ENCODE measurements at regions of chr12 and their contacts with region 1.

Region 1: GRCh38 chr12:89225808-89226411 is 126.4 kb downstream of the DUSP6 start:
- DNase-seq: peak; percentile 86
- H3K4me3 Mint-ChIP-seq: peak overlapping the region; percentile 70
- H3K27ac Mint-ChIP-seq: peak overlapping the region; percentile 99
- H3K4me1 Mint-ChIP-seq: peaks cover 70% of the 10 kb centered on the region
- H3K27me3 Mint-ChIP-seq: no peaks in the 10 kb centered on the region

Region 2: GRCh38 chr12:89019408-89020120 is 206.3 kb before region 1 on chr12:
- CTCF ChIA-PET with region 1: interaction called, 3 read pairs
- intact Hi-C with region 1: loop called (anchors 1 kb)
- DNase-seq: peak; percentile 86
- H3K4me3 Mint-ChIP-seq: no peak overlapping the region
- H3K27ac Mint-ChIP-seq: no peak overlapping the region
- H3K4me1 Mint-ChIP-seq: peaks cover 6% of the 10 kb centered on the region
- H3K27me3 Mint-ChIP-seq: peaks cover 3% of the 10 kb centered on the region

Region 3: GRCh38 chr12:89135976-89136634 is 89.8 kb before region 1 on chr12:
- CTCF ChIA-PET with region 1: no interaction called
- intact Hi-C with region 1: loop called (anchors 1 kb)
- DNase-seq: peak; percentile 9
- H3K4me3 Mint-ChIP-seq: no peak overlapping the region
- H3K27ac Mint-ChIP-seq: no peak overlapping the region
- H3K4me1 Mint-ChIP-seq: peaks cover 22% of the 10 kb centered on the region
- H3K27me3 Mint-ChIP-seq: no peaks in the 10 kb centered on the region

Region 4: DNA sequence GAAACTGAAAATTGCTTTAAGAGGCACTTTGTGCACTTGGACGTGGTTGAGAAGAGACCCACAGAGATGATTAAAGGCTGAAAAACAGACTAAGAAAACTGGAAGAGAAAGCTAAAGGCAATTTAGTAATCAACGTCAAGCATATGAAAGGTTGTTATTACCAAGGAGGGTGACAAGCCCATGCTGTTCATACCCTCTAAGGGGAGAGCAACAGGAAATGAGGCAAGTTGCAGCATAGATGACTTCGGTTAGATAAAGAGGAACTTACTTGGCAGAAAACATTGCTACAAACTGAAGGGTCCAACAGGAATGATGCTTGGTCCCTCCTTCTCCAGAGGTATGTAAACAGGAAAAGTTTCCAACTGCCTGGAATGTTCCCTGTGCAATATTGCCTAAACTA is 18.6 kb after region 1 on chr12:
- CTCF ChIA-PET with region 1: interaction called, 13 read pairs
- intact Hi-C with region 1: loop called (anchors 1 kb)
- DNase-seq: peak; percentile 57
- H3K4me3 Mint-ChIP-seq: peak overlapping the region; percentile 36
- H3K27ac Mint-ChIP-seq: peak overlapping the region; percentile 73
- H3K4me1 Mint-ChIP-seq: peaks cover 33% of the 10 kb centered on the region
- H3K27me3 Mint-ChIP-seq: no peaks in the 10 kb centered on the region

Region 5: GRCh38 chr12:89345830-89346740 is 120.2 kb after region 1 on chr12:
- CTCF ChIA-PET with region 1: interaction called, 5 read pairs
- intact Hi-C with region 1: loop called (anchors 1 kb)
- DNase-seq: peak; percentile 61
- H3K4me3 Mint-ChIP-seq: no peak overlapping the region
- H3K27ac Mint-ChIP-seq: peak overlapping the region; percentile 51
- H3K4me1 Mint-ChIP-seq: peaks cover 43% of the 10 kb centered on the region
- H3K27me3 Mint-ChIP-seq: peaks cover 4% of the 10 kb centered on the region

Region 6: GRCh38 chr12:89524541-89525285 is 298.8 kb after region 1 on chr12 and contains the start of gene GALNT4:
- CTCF ChIA-PET with region 1: no interaction called
- intact Hi-C with region 1: loop called (anchors 1 kb)
- DNase-seq: peak; percentile 80
- H3K4me3 Mint-ChIP-seq: peak within 1 kb of the TSS; percentile 94
- H3K27ac Mint-ChIP-seq: peak within 1 kb of the TSS; percentile 93
- H3K4me1 Mint-ChIP-seq: peaks cover 41% of the 10 kb centered on the region
- H3K27me3 Mint-ChIP-seq: no peaks in the 10 kb centered on the region
- total RNA-seq, gene GALNT4: 2.9 to 3.4 TPM

Region 7: DNA sequence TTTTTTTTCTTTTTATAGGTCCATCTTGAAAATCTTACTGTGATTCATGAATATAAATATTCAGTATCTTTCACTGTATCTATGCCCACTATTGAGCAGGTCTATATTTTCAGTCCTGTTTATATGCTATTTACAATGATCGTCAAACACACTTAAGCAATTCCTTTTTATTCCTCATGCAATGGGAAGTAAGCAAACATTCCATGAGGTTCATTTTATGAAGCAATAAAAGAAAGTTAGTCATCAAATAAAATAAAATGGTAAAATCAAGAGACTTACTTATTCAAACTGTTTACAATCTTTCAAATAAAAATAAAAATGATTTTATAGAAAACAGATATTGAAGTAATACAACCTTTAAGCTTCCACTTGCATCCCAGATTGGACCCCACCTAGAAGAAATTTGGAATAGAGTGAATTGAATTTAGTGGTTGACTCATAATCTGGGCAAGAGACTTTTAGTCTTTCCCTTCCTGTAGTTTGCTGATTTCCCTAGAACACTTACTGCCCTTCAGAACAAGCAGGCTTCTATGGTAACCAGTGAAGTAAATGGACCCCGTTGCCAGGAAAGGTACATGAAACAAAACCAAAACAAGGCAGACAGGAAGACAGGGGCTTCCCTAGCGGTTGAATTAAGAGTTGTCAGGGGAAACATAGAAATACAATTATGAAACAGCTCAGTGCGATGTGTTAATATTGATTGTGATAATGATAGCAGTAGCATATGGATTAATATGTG is 723.7 kb after region 1 on chr12:
- CTCF ChIA-PET with region 1: no interaction called
- intact Hi-C with region 1: loop called (anchors 2 kb)
- DNase-seq: peak; percentile 68
- H3K4me3 Mint-ChIP-seq: no peak overlapping the region
- H3K27ac Mint-ChIP-seq: no peak overlapping the region
- H3K4me1 Mint-ChIP-seq: peaks cover 39% of the 10 kb centered on the region
- H3K27me3 Mint-ChIP-seq: no peaks in the 10 kb centered on the region

Measured in activated naive CD4-positive, alpha-beta T cell treated with anti-CD3 and anti-CD28 coated beads for 36 hours (primary cell).